ENCODE measurements at regions of chr5 and their contacts with region 1.

Region 1: GRCh38 chr5:55763746-55764420 is 26.0 kb downstream of the DDX4 start:
- DNase-seq: no peak
- H3K4me3 ChIP-seq: no peak overlapping the region
- H3K27ac ChIP-seq: no peak overlapping the region
- H3K4me1 ChIP-seq: no peaks in the 10 kb centered on the region
- H3K27me3 ChIP-seq: no peaks in the 10 kb centered on the region
- CTCF ChIP-seq: no peak

Region 2: GRCh38 chr5:55232985-55233928 is 530.6 kb before region 1 on chr5 and contains the start of gene CCNO:
- CTCF ChIA-PET with region 1: no interaction called
- POLR2A ChIA-PET with region 1: interaction called, 12 read pairs
- intact Hi-C with region 1: no loop called
- DNase-seq: peak; percentile 81 to 86
- H3K4me3 ChIP-seq: peak within 1 kb of the TSS; percentile 89
- H3K27ac ChIP-seq: peak within 1 kb of the TSS; percentile 38
- H3K4me1 ChIP-seq: peaks cover 22% of the 10 kb centered on the region
- H3K27me3 ChIP-seq: no peaks in the 10 kb centered on the region
- CTCF ChIP-seq: no peak
- total RNA-seq, gene CCNO: 4.7 and 7.1 TPM in 2 replicates

Region 3: DNA sequence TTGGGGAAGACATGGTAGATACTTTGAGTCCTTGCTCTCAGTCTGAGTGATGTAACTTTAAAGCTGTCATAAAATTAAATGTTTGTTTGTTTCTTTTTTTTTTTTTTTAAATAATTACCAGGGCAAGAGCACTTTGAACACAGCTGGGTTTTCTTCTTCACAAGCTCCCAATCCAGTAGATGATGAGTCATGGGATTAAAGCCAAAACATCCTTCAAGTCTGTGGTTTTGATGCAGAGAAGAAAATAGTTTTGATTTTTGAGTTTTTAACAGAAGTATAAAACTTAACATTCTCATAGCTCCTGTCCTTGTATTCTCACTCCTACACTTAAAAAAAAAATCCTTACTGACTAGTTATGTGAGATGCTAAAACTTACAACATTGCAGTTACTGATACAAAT is 52.5 kb after region 1 on chr5:
- CTCF ChIA-PET with region 1: no interaction called
- POLR2A ChIA-PET with region 1: interaction called, 11 read pairs
- intact Hi-C with region 1: no loop called
- DNase-seq: peak in 1 of 2 experiments; percentile 42
- H3K4me3 ChIP-seq: no peak overlapping the region
- H3K27ac ChIP-seq: no peak overlapping the region
- H3K4me1 ChIP-seq: 0 out of 2 replicates have a peak, but pooled peaks cover 4% of the 10 kb centered on the region
- H3K27me3 ChIP-seq: no peaks in the 10 kb centered on the region
- CTCF ChIP-seq: no peak

Region 4: DNA sequence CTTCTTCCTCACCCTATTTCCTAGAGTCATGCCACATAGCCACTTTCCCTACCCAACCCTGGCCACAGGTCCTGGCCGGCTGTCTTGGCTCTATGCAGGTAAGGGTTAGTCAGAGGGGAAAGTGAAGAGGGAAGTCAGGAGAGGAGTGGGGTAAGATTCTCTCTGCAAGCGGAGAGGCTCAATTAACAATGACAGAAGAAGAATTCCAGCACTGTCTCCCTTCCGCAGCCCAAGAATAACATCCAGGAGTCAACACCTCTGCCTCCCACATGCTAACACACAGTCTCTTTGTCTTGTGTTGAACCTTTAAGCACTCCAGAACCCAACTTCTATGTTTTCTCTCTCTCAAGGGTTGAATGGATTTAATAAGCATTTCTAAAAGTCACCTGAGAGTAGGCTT is 704.4 kb after region 1 on chr5:
- CTCF ChIA-PET with region 1: interaction called, 12 read pairs
- POLR2A ChIA-PET with region 1: no interaction called
- intact Hi-C with region 1: no loop called
- DNase-seq: no peak
- H3K4me3 ChIP-seq: no peak overlapping the region
- H3K27ac ChIP-seq: no peak overlapping the region
- H3K4me1 ChIP-seq: peaks cover 12% of the 10 kb centered on the region; the same call in 1 of the 2 replicates
- H3K27me3 ChIP-seq: no peaks in the 10 kb centered on the region
- CTCF ChIP-seq: no peak

Measured in PC-9 (cell line).